Right ventricle myocardium inferior (tissue), 1 donor: ENCODE measurements at regions of chr15 and their contacts with region 1.

Region 1: GRCh38 chr15:30940359-30940758 is 36.6 kb downstream of the FAN1 start:
- DNase-seq: no peak
- ATAC-seq: no peak

Region 2: DNA sequence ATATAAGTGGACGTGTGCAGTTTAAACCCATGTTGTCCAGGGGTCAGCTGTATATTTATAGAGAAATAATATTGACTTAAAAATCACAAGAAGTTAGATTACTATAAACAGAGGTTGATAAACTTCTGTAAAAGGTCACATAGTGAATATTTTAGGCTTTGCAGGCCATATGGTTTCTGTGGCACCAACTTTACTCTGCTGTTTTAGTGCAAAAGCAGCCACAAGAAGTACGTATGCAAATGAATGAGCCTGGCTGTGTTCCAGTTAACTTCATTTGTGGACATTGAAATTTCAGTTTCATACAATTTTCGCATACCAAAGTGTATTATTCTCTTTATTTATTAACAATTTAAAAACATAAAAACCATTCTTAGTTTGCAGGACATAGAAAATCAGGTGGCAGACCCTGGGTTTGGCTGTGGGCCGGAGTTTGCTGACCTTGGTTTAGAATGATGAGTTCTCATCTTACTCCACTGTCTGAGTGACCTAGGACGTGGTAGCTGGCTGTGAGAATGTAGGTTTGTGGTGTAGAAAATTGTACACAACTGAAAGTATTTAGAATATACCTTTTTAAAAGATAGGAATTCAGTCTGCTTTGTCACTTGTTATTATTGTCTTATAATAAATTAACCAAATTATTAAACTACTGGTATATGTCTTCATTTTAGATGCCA is 20.3 kb before region 1 on chr15:
- intact Hi-C with region 1: no loop called
- DNase-seq: no peak
- ATAC-seq: no peak

Region 3: GRCh38 chr15:31136016-31136415 is 195.7 kb after region 1 on chr15:
- intact Hi-C with region 1: loop called (anchors 10 kb)
- DNase-seq: no peak
- ATAC-seq: no peak